ENCODE measurements at regions of chr12 and their contacts with region 1.

Region 1: DNA sequence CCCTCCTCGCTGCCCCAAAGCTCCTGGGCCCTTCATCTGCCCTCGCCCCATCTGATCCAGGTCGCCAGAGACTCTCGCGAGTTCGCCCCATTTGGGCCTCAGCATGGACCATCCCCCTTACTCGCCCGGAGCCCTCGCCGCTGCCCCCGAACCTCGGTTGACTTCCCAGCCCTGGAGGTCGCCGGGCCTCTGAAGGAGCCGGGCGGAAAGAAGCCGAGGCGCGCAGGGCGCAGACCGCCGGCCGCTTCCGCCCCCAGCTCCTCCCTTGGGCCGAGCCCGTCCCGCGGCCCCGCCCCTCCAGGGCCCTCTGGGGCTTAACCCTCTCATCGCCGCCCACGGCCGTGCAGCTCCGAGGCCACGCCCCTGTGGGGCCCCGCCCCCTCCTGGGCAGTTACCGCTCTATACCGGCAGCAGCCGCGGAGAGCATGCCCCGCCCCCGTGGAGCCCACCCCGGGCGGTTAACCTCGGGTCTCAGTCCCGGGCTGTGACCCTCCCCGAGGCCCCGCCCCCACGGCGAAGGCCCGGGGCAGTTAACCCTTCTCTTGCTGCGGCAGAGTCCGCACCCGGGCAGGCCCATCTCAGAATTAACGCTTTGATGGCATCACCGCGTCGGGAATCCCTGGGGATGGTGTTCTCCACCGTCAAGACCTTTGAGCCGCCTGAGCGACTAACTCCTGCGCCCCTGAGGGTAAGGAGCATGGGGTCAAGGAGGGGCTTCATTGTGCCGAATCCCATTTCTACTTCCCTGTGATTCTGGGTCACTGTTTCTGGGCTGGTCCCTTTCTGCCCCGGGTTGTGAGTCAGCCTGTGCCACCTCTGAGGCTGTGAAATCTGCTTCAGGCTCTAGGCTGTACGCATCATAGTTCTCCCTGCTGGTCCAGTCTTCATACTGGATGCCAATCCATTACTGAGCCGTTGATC is at the start of gene SPSB2:
- DNase-seq: peak; percentile 96 to 100 (median 99)
- ATAC-seq: peak; percentile 89
- H3K4me3 ChIP-seq: peak within 1 kb of the TSS; percentile 93
- H3K4me3 Mint-ChIP-seq: peak within 1 kb of the TSS; percentile 88
- H3K27ac ChIP-seq: peak within 1 kb of the TSS; percentile 58 to 81
- H3K27ac Mint-ChIP-seq: peak within 1 kb of the TSS; percentile 78
- H3K4me1 ChIP-seq: peaks cover 57% of the 10 kb centered on the region
- H3K4me1 Mint-ChIP-seq: peaks cover 54% of the 10 kb centered on the region
- H3K27me3 ChIP-seq: no peaks in the 10 kb centered on the region
- H3K27me3 Mint-ChIP-seq: no peaks in the 10 kb centered on the region
- CTCF ChIP-seq: no peak
- total RNA-seq, gene SPSB2: 3.2 to 3.3 TPM

Region 2: GRCh38 chr12:6752921-6753771 is 120.2 kb before region 1 on chr12 and contains the start of gene MLF2:
- CTCF ChIA-PET with region 1: interaction called, 13 read pairs
- POLR2A ChIA-PET with region 1: interaction called, 14 read pairs
- intact Hi-C with region 1: no loop called
- DNase-seq: peak; percentile 94 to 99 (median 96)
- ATAC-seq: peak; percentile 92
- H3K4me3 ChIP-seq: peak within 1 kb of the TSS; percentile 80
- H3K4me3 Mint-ChIP-seq: peak within 1 kb of the TSS; percentile 96
- H3K27ac ChIP-seq: peak within 1 kb of the TSS; percentile 86 to 96
- H3K27ac Mint-ChIP-seq: peak within 1 kb of the TSS; percentile 100
- H3K4me1 ChIP-seq: peaks cover 24% of the 10 kb centered on the region
- H3K4me1 Mint-ChIP-seq: peaks cover 19% of the 10 kb centered on the region
- H3K27me3 ChIP-seq: no peaks in the 10 kb centered on the region
- H3K27me3 Mint-ChIP-seq: no peaks in the 10 kb centered on the region
- CTCF ChIP-seq: peak; percentile 79
- total RNA-seq, gene MLF2: 114 to 121 TPM

Region 3: DNA sequence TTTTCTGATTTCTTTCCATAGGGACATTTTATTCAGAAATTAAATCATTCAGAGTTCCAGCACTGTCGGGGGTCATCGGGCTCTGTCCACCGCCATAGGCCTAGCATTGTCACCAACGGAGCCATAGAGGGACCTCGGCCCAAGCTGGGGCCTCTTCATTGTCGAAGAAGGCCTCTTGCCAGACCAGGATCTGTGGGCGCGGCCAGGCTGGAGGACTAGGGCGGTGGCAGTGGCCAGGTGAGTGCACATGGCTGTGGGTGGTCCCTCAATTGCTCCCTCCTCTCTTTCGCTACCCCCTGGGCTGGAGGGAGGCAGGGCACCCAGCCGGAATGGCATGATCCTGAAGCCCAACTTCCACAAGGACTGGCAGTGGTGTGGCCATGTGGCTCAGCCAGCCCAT is 10.3 kb after region 1 on chr12:
- CTCF ChIA-PET with region 1: interaction called, 8 read pairs
- POLR2A ChIA-PET with region 1: interaction called, 14 read pairs
- intact Hi-C with region 1: no loop called
- DNase-seq: no peak
- ATAC-seq: no peak
- H3K4me3 ChIP-seq: no peak overlapping the region
- H3K4me3 Mint-ChIP-seq: no peak overlapping the region
- H3K27ac ChIP-seq: no peak overlapping the region
- H3K27ac Mint-ChIP-seq: no peak overlapping the region
- H3K4me1 ChIP-seq: no peaks in the 10 kb centered on the region
- H3K4me1 Mint-ChIP-seq: no peaks in the 10 kb centered on the region
- H3K27me3 ChIP-seq: no peaks in the 10 kb centered on the region
- H3K27me3 Mint-ChIP-seq: no peaks in the 10 kb centered on the region
- CTCF ChIP-seq: no peak

Region 4: DNA sequence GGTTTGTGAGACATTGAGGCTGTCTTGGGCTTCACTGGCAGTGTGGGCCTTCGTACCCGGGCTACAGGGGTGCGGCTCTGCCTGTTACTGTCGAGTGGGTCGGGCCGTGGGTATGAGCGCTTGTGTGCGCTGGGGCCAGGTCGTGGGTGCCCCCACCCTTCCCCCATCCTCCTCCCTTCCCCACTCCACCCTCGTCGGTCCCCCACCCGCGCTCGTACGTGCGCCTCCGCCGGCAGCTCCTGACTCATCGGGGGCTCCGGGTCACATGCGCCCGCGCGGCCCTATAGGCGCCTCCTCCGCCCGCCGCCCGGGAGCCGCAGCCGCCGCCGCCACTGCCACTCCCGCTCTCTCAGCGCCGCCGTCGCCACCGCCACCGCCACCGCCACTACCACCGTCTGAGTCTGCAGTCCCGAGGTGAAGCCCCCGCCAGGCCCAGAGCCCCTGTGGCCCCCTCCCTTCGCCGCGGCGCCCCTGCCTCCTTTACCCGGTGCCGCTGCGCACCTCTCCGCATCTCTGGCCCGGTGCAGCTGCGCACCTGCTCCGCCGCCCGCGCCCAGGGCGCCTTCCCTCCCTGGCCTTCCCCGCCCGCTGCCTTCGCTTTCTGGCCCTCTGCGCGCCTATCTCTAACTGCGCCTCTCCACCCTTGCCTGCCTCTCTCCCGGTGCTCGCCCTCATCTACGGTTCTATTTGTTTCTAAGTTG is 41.0 kb after region 1 on chr12 and contains the start of gene ENO2:
- CTCF ChIA-PET with region 1: interaction called, 24 read pairs
- POLR2A ChIA-PET with region 1: interaction called, 35 read pairs
- intact Hi-C with region 1: loop called in 1 of 2 experiments (anchors 5 kb)
- DNase-seq: peak; percentile 72 to 93 (median 86)
- ATAC-seq: peak; percentile 93
- H3K4me3 ChIP-seq: peak within 1 kb of the TSS; percentile 65
- H3K4me3 Mint-ChIP-seq: peak within 1 kb of the TSS; percentile 94
- H3K27ac ChIP-seq: peak within 1 kb of the TSS; percentile 84 to 90
- H3K27ac Mint-ChIP-seq: peak within 1 kb of the TSS; percentile 82
- H3K4me1 ChIP-seq: peaks cover 32% of the 10 kb centered on the region
- H3K4me1 Mint-ChIP-seq: peaks cover 31% of the 10 kb centered on the region
- H3K27me3 ChIP-seq: no peaks in the 10 kb centered on the region
- H3K27me3 Mint-ChIP-seq: no peaks in the 10 kb centered on the region
- CTCF ChIP-seq: no peak
- total RNA-seq, gene ENO2: 85.6 to 103 TPM

Region 5: GRCh38 chr12:6944381-6945186 is 71.2 kb after region 1 on chr12:
- CTCF ChIA-PET with region 1: interaction called, 33 read pairs
- POLR2A ChIA-PET with region 1: interaction called, 74 read pairs
- intact Hi-C with region 1: loop called in 1 of 2 experiments (anchors 5 kb)
- DNase-seq: peak; percentile 75 to 94 (median 84)
- ATAC-seq: peak; percentile 51
- H3K4me3 ChIP-seq: peak overlapping the region; percentile 65
- H3K4me3 Mint-ChIP-seq: peak overlapping the region; percentile 97
- H3K27ac ChIP-seq: peak overlapping the region; percentile 96 to 98
- H3K27ac Mint-ChIP-seq: peak overlapping the region; percentile 97
- H3K4me1 ChIP-seq: peaks cover 74% of the 10 kb centered on the region
- H3K4me1 Mint-ChIP-seq: peaks cover 73% of the 10 kb centered on the region
- H3K27me3 ChIP-seq: no peaks in the 10 kb centered on the region
- H3K27me3 Mint-ChIP-seq: no peaks in the 10 kb centered on the region
- CTCF ChIP-seq: peak; percentile 92

Region 6: DNA sequence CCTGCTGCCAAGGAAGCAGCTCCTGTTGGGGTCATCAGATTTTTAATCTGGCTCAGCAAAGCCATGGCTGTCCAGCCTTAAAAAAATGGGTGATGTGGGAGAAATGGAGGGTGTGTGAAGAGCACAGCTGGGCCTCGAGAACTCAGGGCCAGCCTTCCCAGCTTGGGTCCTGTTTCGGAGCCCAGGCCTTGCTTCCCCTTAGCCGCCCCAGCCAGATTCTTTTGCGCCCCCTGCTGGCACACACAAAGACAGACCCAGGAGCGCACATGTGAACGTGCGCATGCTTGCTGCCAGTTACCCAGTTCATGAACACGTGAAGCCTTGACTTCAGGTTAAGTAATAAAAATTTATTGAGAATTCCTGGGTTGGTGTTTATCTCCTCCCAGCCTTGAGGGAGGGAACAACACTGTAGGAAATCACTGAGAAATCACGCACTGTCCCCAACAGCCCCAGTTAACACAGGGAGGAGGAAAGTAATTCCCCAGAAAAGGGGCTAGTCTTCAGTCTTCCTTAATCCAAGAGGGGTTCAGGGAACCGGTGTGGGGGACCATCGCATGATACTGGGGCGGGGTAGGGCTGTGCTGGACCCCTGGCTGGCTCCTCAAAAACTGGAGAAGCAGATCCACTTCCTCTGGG is 91.8 kb after region 1 on chr12:
- CTCF ChIA-PET with region 1: interaction called, 8 read pairs
- POLR2A ChIA-PET with region 1: interaction called, 17 read pairs
- intact Hi-C with region 1: loop called (anchors 1 to 2 kb)
- DNase-seq: peak; percentile 83 to 96 (median 86)
- ATAC-seq: peak; percentile 50
- H3K4me3 ChIP-seq: no peak overlapping the region
- H3K4me3 Mint-ChIP-seq: peak overlapping the region; percentile 79
- H3K27ac ChIP-seq: peak overlapping the region; percentile 38 to 39
- H3K27ac Mint-ChIP-seq: peak overlapping the region; percentile 90
- H3K4me1 ChIP-seq: peaks cover 70% of the 10 kb centered on the region
- H3K4me1 Mint-ChIP-seq: peaks cover 58% of the 10 kb centered on the region
- H3K27me3 ChIP-seq: no peaks in the 10 kb centered on the region
- H3K27me3 Mint-ChIP-seq: no peaks in the 10 kb centered on the region
- CTCF ChIP-seq: peak; percentile 94

Region 7: GRCh38 chr12:7162691-7163114 is 289.3 kb after region 1 on chr12:
- CTCF ChIA-PET with region 1: no interaction called
- POLR2A ChIA-PET with region 1: no interaction called
- intact Hi-C with region 1: no loop called
- DNase-seq: peak in 7 of 14 experiments; percentile 5 to 51 (median 22)
- ATAC-seq: peak; percentile 87
- H3K4me3 ChIP-seq: peak overlapping the region; percentile 19
- H3K4me3 Mint-ChIP-seq: peak overlapping the region; percentile 62
- H3K27ac ChIP-seq: no peak overlapping the region
- H3K27ac Mint-ChIP-seq: no peak overlapping the region
- H3K4me1 ChIP-seq: peaks cover 8% of the 10 kb centered on the region
- H3K4me1 Mint-ChIP-seq: peaks cover 13% of the 10 kb centered on the region
- H3K27me3 ChIP-seq: peaks cover 0 to 4% of the 10 kb centered on the region in 2 experiments
- H3K27me3 Mint-ChIP-seq: peaks cover 32% of the 10 kb centered on the region
- CTCF ChIP-seq: peak; percentile 19

Region 8: DNA sequence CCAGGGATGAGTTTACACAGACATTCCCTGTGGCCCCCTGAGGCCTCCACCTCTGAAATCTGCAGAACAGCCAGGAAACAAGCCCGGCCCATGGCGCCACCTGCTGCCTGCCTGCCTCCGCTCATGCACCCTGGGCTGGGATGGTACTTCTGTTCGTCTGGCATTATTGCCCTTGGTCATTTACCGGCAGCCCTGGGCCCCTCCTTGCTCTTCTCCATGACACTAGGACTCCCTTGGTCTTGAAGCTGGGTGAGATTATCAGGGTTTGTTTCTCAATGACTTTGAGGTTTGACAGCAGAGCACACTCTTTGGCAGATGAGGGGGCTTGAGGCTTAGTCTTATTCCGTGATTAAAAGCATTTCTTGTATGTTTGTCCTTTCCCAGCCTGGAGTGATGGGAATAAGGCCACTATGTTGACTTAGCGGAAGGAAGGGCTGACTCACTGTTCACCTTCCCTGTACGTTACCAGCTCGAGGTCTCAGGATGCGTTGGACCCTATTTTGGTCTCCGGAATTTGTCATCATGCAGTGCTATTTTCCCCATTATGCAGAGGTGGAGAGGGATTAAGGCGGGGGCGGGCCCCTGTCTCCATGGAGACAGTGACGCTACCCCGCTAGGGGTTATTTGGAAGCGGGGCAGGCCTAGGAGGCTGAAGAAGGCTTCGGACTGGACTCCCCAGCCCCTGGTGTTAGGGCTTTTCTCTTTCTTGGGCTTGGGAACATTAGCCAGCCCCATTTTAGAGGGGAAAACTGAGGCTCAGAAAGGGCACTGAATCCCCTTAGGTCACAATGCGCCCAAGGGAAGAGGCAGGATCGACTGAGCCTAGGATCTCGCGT is 315.4 kb after region 1 on chr12:
- CTCF ChIA-PET with region 1: no interaction called
- POLR2A ChIA-PET with region 1: no interaction called
- intact Hi-C with region 1: loop called (anchors 1 to 2 kb)
- DNase-seq: peak; percentile 43 to 79 (median 58)
- ATAC-seq: peak; percentile 44
- H3K4me3 ChIP-seq: peak overlapping the region; percentile 91
- H3K4me3 Mint-ChIP-seq: peak overlapping the region; percentile 98
- H3K27ac ChIP-seq: peak overlapping the region; percentile 91 to 93
- H3K27ac Mint-ChIP-seq: peak overlapping the region; percentile 97
- H3K4me1 ChIP-seq: peaks cover 27% of the 10 kb centered on the region
- H3K4me1 Mint-ChIP-seq: peaks cover 46% of the 10 kb centered on the region
- H3K27me3 ChIP-seq: no peaks in the 10 kb centered on the region
- H3K27me3 Mint-ChIP-seq: no peaks in the 10 kb centered on the region
- CTCF ChIP-seq: peak; percentile 63